ENCODE measurements at regions of chr14 and their contacts with region 1.

Region 1: DNA sequence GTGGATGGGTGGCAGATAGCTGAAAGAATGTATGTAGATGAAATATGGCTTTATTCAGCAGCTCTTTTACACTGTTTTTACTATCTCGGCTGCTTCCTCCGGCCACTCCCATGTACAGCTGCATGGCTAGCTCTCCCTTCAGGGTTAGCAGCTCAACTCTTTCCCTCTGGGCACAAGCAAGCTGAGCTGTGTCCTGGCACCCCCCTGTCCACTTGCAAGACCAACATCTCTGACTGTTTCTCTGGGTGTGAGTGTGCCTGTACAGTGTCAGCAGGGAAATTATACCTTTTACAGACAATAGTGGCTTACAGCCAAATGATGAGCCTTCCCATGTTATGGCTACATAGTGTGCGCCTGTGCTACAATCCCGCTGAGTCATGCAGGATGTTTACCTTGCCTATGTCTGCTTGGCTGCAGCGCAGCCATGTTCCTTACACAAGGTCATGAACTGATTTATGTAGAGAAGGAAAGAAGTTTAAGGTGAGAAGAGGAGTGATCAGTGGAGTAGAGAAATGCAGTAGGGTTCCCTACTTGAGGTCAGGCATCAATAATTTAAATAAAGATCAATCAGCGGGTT is 125.9 kb upstream of the DDHD1 start:
- DNase-seq: peak; percentile 88
- H3K4me3 Mint-ChIP-seq: no peak overlapping the region
- H3K27ac Mint-ChIP-seq: peak overlapping the region; percentile 2
- H3K4me1 Mint-ChIP-seq: peaks cover 11% of the 10 kb centered on the region
- H3K27me3 Mint-ChIP-seq: no peaks in the 10 kb centered on the region
- CTCF ChIP-seq: no peak

Region 2: GRCh38 chr14:53152890-53153701 is 125.9 kb before region 1 on chr14 and contains the start of gene DDHD1:
- CTCF ChIA-PET with region 1: interaction called, 3 read pairs
- POLR2A ChIA-PET with region 1: no interaction called
- intact Hi-C with region 1: loop called (anchors 10 kb)
- DNase-seq: peak; percentile 65
- H3K4me3 Mint-ChIP-seq: peak within 1 kb of the TSS; percentile 100
- H3K27ac Mint-ChIP-seq: peak within 1 kb of the TSS; percentile 92
- H3K4me1 Mint-ChIP-seq: peaks cover 17% of the 10 kb centered on the region
- H3K27me3 Mint-ChIP-seq: no peaks in the 10 kb centered on the region
- CTCF ChIP-seq: no peak
- total RNA-seq, gene DDHD1: 16.3 and 18.3 TPM in 2 replicates

Region 3: GRCh38 chr14:53295985-53296582 is 17.1 kb after region 1 on chr14:
- CTCF ChIA-PET with region 1: interaction called, 13 read pairs
- POLR2A ChIA-PET with region 1: no interaction called
- intact Hi-C with region 1: no loop called
- DNase-seq: peak; percentile 52
- H3K4me3 Mint-ChIP-seq: no peak overlapping the region
- H3K27ac Mint-ChIP-seq: no peak overlapping the region
- H3K4me1 Mint-ChIP-seq: no peaks in the 10 kb centered on the region
- H3K27me3 Mint-ChIP-seq: no peaks in the 10 kb centered on the region
- CTCF ChIP-seq: peak; percentile 57